Activated CD4-positive, alpha-beta T cell treated with anti-CD3 and anti-CD28 coated beads for 36 hours (primary cell): ENCODE measurements at regions of chr1 and their contacts with region 1.

Region 1: DNA sequence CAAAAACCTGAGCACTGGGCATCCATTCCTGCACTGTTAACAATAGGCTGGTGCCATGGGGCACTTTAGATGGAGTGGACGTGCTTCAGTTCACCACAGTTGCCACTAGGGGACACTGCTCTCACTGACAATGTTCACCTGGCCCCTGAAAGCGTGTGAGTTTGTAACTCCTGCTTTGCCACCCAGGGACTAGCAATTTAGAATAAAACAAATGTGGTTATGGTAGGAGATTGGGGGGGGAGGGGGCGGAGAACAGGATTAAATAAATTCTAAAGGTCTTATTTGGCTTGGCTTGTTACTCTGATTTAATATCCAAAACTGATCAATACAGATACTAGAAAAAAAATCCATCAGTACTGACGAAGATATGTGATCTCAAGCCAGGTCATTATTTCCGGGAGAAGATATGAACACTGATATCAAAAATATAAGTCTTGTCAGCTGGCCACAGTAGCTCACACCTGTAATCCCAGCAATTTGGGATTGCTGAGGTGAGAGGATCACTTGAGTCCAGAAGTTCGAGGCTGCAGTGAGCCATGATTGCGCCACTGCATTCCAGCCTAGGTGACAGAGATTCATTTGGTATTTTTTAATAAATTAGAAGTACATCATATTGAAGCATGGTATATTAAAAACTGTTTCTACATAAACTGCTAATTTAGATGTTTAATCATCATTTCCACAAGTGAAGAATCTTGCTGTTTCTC is 23.2 kb downstream of the INTS7 start:
- DNase-seq: peak; percentile 80
- ATAC-seq: peak; percentile 99
- H3K4me3 Mint-ChIP-seq: no peak overlapping the region
- H3K27ac Mint-ChIP-seq: no peak overlapping the region
- H3K4me1 Mint-ChIP-seq: no peaks in the 10 kb centered on the region
- H3K27me3 Mint-ChIP-seq: no peaks in the 10 kb centered on the region

Region 2: DNA sequence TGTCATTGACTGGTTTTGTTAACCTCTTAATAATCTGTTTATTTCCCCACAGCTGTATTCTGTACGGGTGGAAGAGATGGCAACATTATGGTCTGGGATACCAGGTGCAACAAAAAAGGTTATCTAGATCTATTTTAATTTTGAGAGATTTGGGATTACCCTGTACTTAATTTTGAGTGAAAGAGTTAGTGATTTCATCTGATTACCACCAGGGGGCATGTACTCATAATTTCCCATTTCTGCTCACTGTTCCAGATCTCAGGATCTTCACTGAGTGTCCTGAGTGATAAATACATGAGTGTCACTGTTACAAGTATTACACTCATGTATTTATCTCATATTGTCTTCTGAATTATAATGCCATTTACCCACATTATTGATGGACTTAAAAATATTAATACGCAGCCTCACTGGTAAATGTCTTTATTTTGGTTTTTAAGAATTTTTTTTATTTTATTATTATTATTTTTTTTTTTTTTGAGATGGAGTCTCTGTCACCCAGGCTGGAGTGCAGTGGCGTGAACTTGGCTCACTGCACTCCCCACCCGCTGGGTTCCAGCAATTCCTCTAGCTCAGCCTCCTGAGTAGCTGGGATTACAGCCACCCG is 50.7 kb after region 1 on chr1:
- CTCF ChIA-PET with region 1: interaction called, 3 read pairs
- POLR2A ChIA-PET with region 1: no interaction called
- intact Hi-C with region 1: loop called in 1 of 2 experiments (anchors 2 kb)
- DNase-seq: no peak
- ATAC-seq: no peak
- H3K4me3 Mint-ChIP-seq: no peak overlapping the region
- H3K27ac Mint-ChIP-seq: no peak overlapping the region
- H3K4me1 Mint-ChIP-seq: no peaks in the 10 kb centered on the region
- H3K27me3 Mint-ChIP-seq: no peaks in the 10 kb centered on the region